Posterior vena cava (tissue), 2 donors: ENCODE measurements at regions of chr19 and their contacts with region 1.

Region 1: GRCh38 chr19:33394006-33394849 is 20.7 kb downstream of the CEBPG start:
- DNase-seq: peak; percentile 93

Region 2: GRCh38 chr19:33292595-33293441 is 101.4 kb before region 1 on chr19:
- intact Hi-C with region 1: loop called in 1 of 2 experiments (anchors 10 kb)
- DNase-seq: no peak

Region 3: GRCh38 chr19:33302175-33302973 is 91.9 kb before region 1 on chr19 and contains the start of gene CEBPA:
- intact Hi-C with region 1: loop called (anchors 5 to 10 kb)
- DNase-seq: peak; percentile 94
- total RNA-seq, gene CEBPA: 6.3 to 8.0 TPM